ENCODE measurements at regions of chr6 and their contacts with region 1.

Region 1: GRCh38 chr6:119669221-119669620 is 319.7 kb upstream of the MAN1A1 start:
- DNase-seq: no peak
- H3K4me3 ChIP-seq: no peak overlapping the region
- H3K27ac ChIP-seq: no peak overlapping the region
- H3K4me1 ChIP-seq: peaks cover 3% of the 10 kb centered on the region
- CTCF ChIP-seq: no peak

Region 2: GRCh38 chr6:119658917-119659316 is 10.3 kb before region 1 on chr6:
- CTCF ChIA-PET with region 1: no interaction called
- POLR2A ChIA-PET with region 1: interaction called, 17 read pairs
- intact Hi-C with region 1: no loop called
- DNase-seq: no peak
- H3K4me3 ChIP-seq: no peak overlapping the region
- H3K27ac ChIP-seq: no peak overlapping the region
- H3K4me1 ChIP-seq: no peaks in the 10 kb centered on the region
- CTCF ChIP-seq: no peak

Measured in OCI-LY7 (cell line).